Psoas muscle (tissue), 8 donors: ENCODE measurements at regions of chr6 and their contacts with region 1.

Region 1: GRCh38 chr6:88532241-88532860 is 366.2 kb upstream of the CNR1 start:
- DNase-seq: no peak
- ATAC-seq: no peak
- H3K4me3 ChIP-seq: no peak overlapping the region
- H3K27ac ChIP-seq: no peak overlapping the region
- H3K4me1 ChIP-seq: no peaks in the 10 kb centered on the region
- H3K27me3 ChIP-seq: no peaks in the 10 kb centered on the region
- CTCF ChIP-seq: no peak

Region 2: DNA sequence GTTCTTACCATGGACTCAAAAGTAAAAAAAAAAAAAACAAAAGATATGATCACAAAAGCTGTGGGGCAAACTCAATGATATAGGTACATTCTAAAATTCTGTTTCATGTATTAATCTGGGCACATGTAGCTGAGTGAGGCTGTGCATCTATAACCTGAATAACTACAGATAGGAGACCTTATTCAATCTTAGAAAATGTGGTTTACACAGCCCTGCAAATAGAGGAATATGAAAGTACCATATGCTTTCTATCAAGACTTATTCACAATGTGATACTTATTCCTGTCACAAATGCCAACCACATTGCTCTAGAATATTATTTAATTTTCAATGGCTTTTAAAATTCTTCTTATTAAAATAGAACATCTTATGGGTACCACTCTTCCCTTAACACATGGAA is 487.8 kb before region 1 on chr6:
- intact Hi-C with region 1: loop called in 1 of 2 experiments (anchors 5 kb)
- DNase-seq: no peak
- ATAC-seq: no peak
- H3K4me3 ChIP-seq: no peak overlapping the region
- H3K27ac ChIP-seq: no peak overlapping the region
- H3K4me1 ChIP-seq: no peaks in the 10 kb centered on the region
- H3K27me3 ChIP-seq: peaks cover 0 to 9% (median 4%) of the 10 kb centered on the region in 3 donors
- CTCF ChIP-seq: no peak